A549 (cell line): ENCODE measurements at regions of chr17 and their contacts with region 1.

Region 1: GRCh38 chr17:58121925-58122324 is 26.3 kb upstream of the OR4D1 start:
- DNase-seq: peak; percentile 62 to 76
- ATAC-seq: peak; percentile 74 to 84; a peak in 4 of 6 replicates
- H3K4me3 ChIP-seq: no peak overlapping the region
- H3K27ac ChIP-seq: no peak overlapping the region
- H3K4me1 ChIP-seq: no peaks in the 10 kb centered on the region
- CTCF ChIP-seq: peak; percentile 51
- EP300 ChIP-seq: no peak
- POLR2A ChIP-seq: no peak
- RAD21 ChIP-seq: peak; percentile 67 to 68

Region 2: GRCh38 chr17:58136669-58137283 is 14.9 kb after region 1 on chr17:
- CTCF ChIA-PET with region 1: interaction called, 20 read pairs
- POLR2A ChIA-PET with region 1: no interaction called
- DNase-seq: peak; percentile 53 to 57
- ATAC-seq: peak; percentile 94 to 96
- H3K4me3 ChIP-seq: no peak overlapping the region
- H3K27ac ChIP-seq: no peak overlapping the region
- H3K4me1 ChIP-seq: no peaks in the 10 kb centered on the region
- CTCF ChIP-seq: peak; percentile 61
- EP300 ChIP-seq: no peak
- POLR2A ChIP-seq: no peak
- RAD21 ChIP-seq: peak; percentile 55 to 69

Region 3: GRCh38 chr17:58161566-58161965 is 39.6 kb after region 1 on chr17:
- CTCF ChIA-PET with region 1: interaction called, 10 read pairs
- POLR2A ChIA-PET with region 1: no interaction called
- DNase-seq: no peak
- ATAC-seq: no peak
- H3K4me3 ChIP-seq: no peak overlapping the region
- H3K27ac ChIP-seq: no peak overlapping the region
- H3K4me1 ChIP-seq: no peaks in the 10 kb centered on the region
- CTCF ChIP-seq: no peak
- EP300 ChIP-seq: no peak
- POLR2A ChIP-seq: no peak
- RAD21 ChIP-seq: no peak

Region 4: GRCh38 chr17:58172369-58173071 is 50.6 kb after region 1 on chr17:
- CTCF ChIA-PET with region 1: interaction called, 30 read pairs
- POLR2A ChIA-PET with region 1: no interaction called
- DNase-seq: peak; percentile 68 to 75
- ATAC-seq: peak; percentile 75 to 91
- H3K4me3 ChIP-seq: no peak overlapping the region
- H3K27ac ChIP-seq: no peak overlapping the region
- H3K4me1 ChIP-seq: no peaks in the 10 kb centered on the region
- CTCF ChIP-seq: peak; percentile 61
- EP300 ChIP-seq: no peak
- POLR2A ChIP-seq: no peak
- RAD21 ChIP-seq: peak; percentile 53 to 85

Region 5: DNA sequence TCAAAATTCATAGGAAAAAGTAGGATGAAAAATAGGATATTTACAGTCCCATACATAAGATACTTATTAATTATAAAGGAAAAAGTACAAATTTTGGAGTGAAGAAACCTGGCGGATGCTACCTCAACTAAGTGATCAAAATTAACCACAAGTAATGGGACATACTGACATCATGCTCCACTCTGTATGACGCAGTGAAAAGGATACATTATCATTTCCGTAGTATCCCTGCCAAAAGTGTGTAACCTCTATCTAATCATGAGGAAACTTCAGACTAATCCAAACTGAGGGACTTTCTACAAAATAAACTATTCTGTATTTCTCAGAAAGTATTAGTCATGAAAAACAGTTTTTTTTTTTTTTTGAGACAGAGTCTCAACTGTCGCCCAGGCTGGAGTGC is 924.3 kb after region 1 on chr17:
- CTCF ChIA-PET with region 1: no interaction called
- POLR2A ChIA-PET with region 1: no interaction called
- DNase-seq: no peak
- ATAC-seq: no peak
- H3K4me3 ChIP-seq: no peak overlapping the region
- H3K27ac ChIP-seq: no peak overlapping the region
- H3K4me1 ChIP-seq: no peaks in the 10 kb centered on the region
- CTCF ChIP-seq: no peak
- EP300 ChIP-seq: no peak
- POLR2A ChIP-seq: no peak
- RAD21 ChIP-seq: no peak